Left colon (tissue), 2 donors: ENCODE measurements at regions of chr9 and their contacts with region 1.

Region 1: GRCh38 chr9:28692020-28692419 is 1118.7 kb upstream of the C9orf72 start:
- DNase-seq: no peak
- ATAC-seq: no peak

Region 2: GRCh38 chr9:28487561-28487960 is 204.5 kb before region 1 on chr9:
- intact Hi-C with region 1: no loop called
- DNase-seq: no peak
- ATAC-seq: no peak

Region 3: DNA sequence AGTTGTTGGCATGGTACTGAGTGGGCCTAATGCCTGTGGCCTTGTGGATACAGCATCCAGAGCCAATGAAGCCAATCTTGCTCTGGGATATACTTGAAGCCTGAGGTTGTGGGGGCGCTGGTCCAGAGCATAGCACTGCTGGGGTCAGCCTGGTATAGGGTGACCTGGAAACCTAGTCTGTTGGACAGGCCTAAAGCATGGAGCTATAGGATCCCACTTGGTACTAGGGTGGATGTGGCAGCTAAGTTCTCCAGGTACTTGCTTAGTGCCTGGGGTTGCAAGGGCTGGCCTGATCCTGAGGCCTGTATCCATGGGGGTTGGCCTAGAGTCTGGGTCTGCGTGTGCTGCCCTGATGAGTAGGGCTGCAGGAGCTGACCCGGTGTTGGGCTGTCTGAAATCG is 49.4 kb after region 1 on chr9:
- intact Hi-C with region 1: no loop called
- DNase-seq: no peak
- ATAC-seq: no peak

Region 4: GRCh38 chr9:28758341-28758740 is 66.3 kb after region 1 on chr9:
- intact Hi-C with region 1: loop called in 1 of 2 experiments (anchors 10 kb)
- DNase-seq: no peak
- ATAC-seq: no peak